ENCODE measurements at regions of chr14 and their contacts with region 1.

Region 1: DNA sequence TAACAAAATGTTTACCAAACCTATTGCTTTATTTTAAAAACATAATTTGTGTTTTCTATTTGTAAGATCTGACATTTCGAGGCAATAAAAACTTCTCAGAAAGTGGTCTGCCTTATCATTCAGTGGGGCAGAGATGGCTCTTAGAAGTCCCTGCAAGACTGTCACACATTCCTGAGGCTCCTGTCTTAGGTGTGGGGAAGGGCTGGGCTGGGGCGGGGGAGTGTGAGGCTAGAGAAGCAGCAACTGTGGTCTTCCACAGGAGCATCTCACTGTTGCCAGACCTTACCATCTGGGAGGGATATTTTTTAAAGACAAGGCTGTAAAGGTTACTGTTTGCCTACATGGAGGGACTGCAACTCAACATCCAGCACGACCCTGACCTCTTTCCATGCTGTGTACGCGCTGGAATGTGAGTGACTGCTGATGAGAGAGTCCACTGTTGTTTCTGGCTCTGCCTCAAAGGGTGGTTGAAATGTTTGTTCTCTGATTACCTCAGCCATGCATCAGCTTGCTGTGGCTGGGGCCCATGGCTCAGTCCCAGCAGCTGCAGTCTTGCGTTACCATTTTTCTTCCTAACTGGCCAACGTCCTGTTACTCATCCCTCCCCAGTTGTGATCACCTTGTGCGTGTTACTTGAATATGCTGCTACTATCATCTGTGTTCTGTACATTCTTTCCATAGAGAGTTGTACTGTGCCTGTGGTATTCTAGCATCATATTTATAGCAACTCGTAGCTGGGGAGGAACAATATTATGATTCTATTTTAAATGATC is 12.4 kb downstream of the ERG28 start:
- DNase-seq: no peak
- ATAC-seq: no peak
- H3K4me3 ChIP-seq: no peak overlapping the region
- H3K4me3 Mint-ChIP-seq: no peak overlapping the region
- H3K27ac ChIP-seq: no peak overlapping the region
- H3K27ac Mint-ChIP-seq: peak overlapping the region; percentile 70
- H3K4me1 ChIP-seq: no peaks in the 10 kb centered on the region
- H3K4me1 Mint-ChIP-seq: no peaks in the 10 kb centered on the region
- H3K27me3 ChIP-seq: no peaks in the 10 kb centered on the region
- H3K27me3 Mint-ChIP-seq: no peaks in the 10 kb centered on the region
- CTCF ChIP-seq: no peak

Region 2: GRCh38 chr14:75373616-75374015 is 274.6 kb before region 1 on chr14:
- CTCF ChIA-PET with region 1: no interaction called
- POLR2A ChIA-PET with region 1: no interaction called
- intact Hi-C with region 1: no loop called
- DNase-seq: no peak
- ATAC-seq: no peak
- H3K4me3 ChIP-seq: no peak overlapping the region
- H3K4me3 Mint-ChIP-seq: no peak overlapping the region
- H3K27ac ChIP-seq: no peak overlapping the region
- H3K27ac Mint-ChIP-seq: no peak overlapping the region
- H3K4me1 ChIP-seq: no peaks in the 10 kb centered on the region
- H3K4me1 Mint-ChIP-seq: no peaks in the 10 kb centered on the region
- H3K27me3 ChIP-seq: no peaks in the 10 kb centered on the region
- H3K27me3 Mint-ChIP-seq: peaks cover 3% of the 10 kb centered on the region
- CTCF ChIP-seq: no peak

Region 3: GRCh38 chr14:75577729-75578101 is 70.5 kb before region 1 on chr14:
- CTCF ChIA-PET with region 1: interaction called, 293 read pairs
- POLR2A ChIA-PET with region 1: no interaction called
- intact Hi-C with region 1: no loop called
- DNase-seq: peak; percentile 34 to 79 (median 69)
- ATAC-seq: peak; percentile 80
- H3K4me3 ChIP-seq: peak overlapping the region; percentile 64 to 72
- H3K4me3 Mint-ChIP-seq: peak overlapping the region; percentile 91
- H3K27ac ChIP-seq: no peak overlapping the region
- H3K27ac Mint-ChIP-seq: peak overlapping the region; percentile 53
- H3K4me1 ChIP-seq: peaks cover 10% of the 10 kb centered on the region
- H3K4me1 Mint-ChIP-seq: peaks cover 23% of the 10 kb centered on the region
- H3K27me3 ChIP-seq: no peaks in the 10 kb centered on the region
- H3K27me3 Mint-ChIP-seq: no peaks in the 10 kb centered on the region
- CTCF ChIP-seq: peak; percentile 62